Ascending aorta (tissue), 2 donors: ENCODE measurements at regions of chr4 and their contacts with region 1.

Region 1: GRCh38 chr4:165464813-165465381 is 86.1 kb downstream of the CPE start:
- DNase-seq: no peak
- H3K4me3 ChIP-seq: no peak overlapping the region
- H3K27ac ChIP-seq: peak overlapping the region in 1 of 2 donors; percentile 15
- H3K4me1 ChIP-seq: no peaks in the 10 kb centered on the region
- H3K27me3 ChIP-seq: no peaks in the 10 kb centered on the region
- CTCF ChIP-seq: peak; percentile 64 to 84 (median 81)

Region 2: DNA sequence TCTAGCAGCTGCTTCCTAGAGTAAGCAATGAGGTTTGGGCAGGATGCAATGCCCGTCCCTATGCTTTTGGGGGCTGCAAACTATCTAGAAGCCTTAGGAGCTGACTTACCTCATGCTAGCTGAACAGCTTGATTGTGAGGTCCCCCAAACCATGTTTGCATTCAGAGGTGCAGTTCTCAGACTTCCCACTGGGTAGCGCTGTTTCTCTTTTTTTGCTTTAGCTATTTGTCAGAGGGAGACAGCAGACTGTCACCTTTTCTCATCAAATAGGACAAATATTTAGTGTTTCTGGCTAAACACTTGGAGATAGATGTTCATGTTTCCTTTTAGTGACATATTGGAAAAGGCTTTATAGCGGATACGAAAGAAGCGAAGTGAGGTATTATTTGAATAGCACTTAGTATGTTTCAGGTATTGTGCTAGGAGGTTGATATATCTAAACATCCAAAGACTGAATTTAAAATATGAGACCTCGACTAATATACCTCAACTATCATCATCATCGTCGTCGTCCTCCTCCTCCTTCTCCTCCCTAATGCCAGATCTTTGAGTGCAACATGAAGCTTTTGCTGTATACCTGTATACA is 333.6 kb before region 1 on chr4:
- intact Hi-C with region 1: loop called (anchors 1 kb)
- DNase-seq: peak in 1 of 2 donors; percentile 74
- H3K4me3 ChIP-seq: no peak overlapping the region
- H3K27ac ChIP-seq: no peak overlapping the region
- H3K4me1 ChIP-seq: no peaks in the 10 kb centered on the region
- H3K27me3 ChIP-seq: no peaks in the 10 kb centered on the region
- CTCF ChIP-seq: peak; percentile 82 to 95 (median 88)

Region 3: GRCh38 chr4:165335163-165335703 is 129.7 kb before region 1 on chr4:
- intact Hi-C with region 1: loop called (anchors 5 kb)
- DNase-seq: no peak
- H3K4me3 ChIP-seq: no peak overlapping the region
- H3K27ac ChIP-seq: no peak overlapping the region
- H3K4me1 ChIP-seq: no peaks in the 10 kb centered on the region
- H3K27me3 ChIP-seq: no peaks in the 10 kb centered on the region
- CTCF ChIP-seq: no peak

Region 4: DNA sequence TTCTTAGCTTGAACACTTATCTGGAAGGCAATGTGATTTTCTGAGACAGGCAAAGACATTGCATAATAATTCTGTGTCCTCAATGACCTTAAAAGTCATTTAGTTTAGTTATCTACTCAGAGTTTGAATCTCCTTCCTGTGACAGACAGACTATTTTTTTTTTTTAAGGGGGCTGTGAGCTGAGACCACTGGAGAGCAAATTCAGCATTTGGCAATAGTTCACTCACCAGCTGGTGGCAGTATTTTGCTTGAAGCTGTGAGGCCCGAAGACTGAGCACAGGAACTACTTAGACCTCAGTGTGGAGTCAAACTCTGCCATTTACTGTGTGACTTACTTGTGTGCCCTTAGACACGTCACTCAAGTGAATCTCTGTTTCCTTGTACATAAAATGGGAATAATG is 109.0 kb before region 1 on chr4:
- intact Hi-C with region 1: loop called (anchors 1 kb)
- DNase-seq: no peak
- H3K4me3 ChIP-seq: no peak overlapping the region
- H3K27ac ChIP-seq: no peak overlapping the region
- H3K4me1 ChIP-seq: no peaks in the 10 kb centered on the region
- H3K27me3 ChIP-seq: no peaks in the 10 kb centered on the region
- CTCF ChIP-seq: peak; percentile 32 to 57 (median 36)

Region 5: GRCh38 chr4:165378745-165379677 is 85.9 kb before region 1 on chr4 and contains the start of gene CPE:
- intact Hi-C with region 1: loop called (anchors 2 kb)
- DNase-seq: peak; percentile 23 to 94
- H3K4me3 ChIP-seq: peak within 1 kb of the TSS; percentile 75 to 93
- H3K27ac ChIP-seq: peak within 1 kb of the TSS; percentile 87 to 88
- H3K4me1 ChIP-seq: peaks cover 0 to 11% of the 10 kb centered on the region in 2 donors
- H3K27me3 ChIP-seq: no peaks in the 10 kb centered on the region
- CTCF ChIP-seq: peak; percentile 56 to 67 (median 65)
- total RNA-seq, gene CPE: 199 TPM